ENCODE measurements at regions of chr1 and their contacts with region 1.

Region 1: GRCh38 chr1:156740679-156741612 is at the start of gene MRPL24:
- DNase-seq: peak; percentile 93
- CTCF ChIP-seq: no peak

Region 2: GRCh38 chr1:156767101-156767878 is 26.3 kb after region 1 on chr1 and contains the start of gene PRCC:
- CTCF ChIA-PET with region 1: interaction called, 6 read pairs
- POLR2A ChIA-PET with region 1: interaction called, 15 read pairs
- DNase-seq: peak; percentile 92
- CTCF ChIP-seq: no peak

Region 3: DNA sequence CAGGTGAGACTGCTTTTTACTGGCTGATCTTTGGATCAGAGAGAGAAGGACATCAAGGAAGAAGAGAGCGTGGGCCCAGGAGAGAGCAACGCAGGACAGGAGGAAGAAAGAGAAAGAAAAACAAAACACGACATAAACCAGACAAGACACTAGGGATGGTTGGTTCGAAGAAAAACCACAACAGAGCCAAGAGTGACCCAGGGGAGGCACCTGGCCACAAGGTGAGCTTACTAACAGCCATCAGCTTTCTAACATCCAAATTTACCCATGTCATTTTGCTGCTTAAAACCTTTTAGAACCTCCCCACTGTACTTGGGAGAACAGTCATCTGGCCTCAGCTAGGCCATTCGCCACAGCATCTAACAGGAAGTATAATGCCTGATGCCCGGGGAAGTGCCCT is 246.8 kb after region 1 on chr1:
- CTCF ChIA-PET with region 1: no interaction called
- POLR2A ChIA-PET with region 1: no interaction called
- DNase-seq: no peak
- CTCF ChIP-seq: no peak

Measured in GM10248 (cell line).